ENCODE measurements at regions of chr2 and their contacts with region 1.

Region 1: DNA sequence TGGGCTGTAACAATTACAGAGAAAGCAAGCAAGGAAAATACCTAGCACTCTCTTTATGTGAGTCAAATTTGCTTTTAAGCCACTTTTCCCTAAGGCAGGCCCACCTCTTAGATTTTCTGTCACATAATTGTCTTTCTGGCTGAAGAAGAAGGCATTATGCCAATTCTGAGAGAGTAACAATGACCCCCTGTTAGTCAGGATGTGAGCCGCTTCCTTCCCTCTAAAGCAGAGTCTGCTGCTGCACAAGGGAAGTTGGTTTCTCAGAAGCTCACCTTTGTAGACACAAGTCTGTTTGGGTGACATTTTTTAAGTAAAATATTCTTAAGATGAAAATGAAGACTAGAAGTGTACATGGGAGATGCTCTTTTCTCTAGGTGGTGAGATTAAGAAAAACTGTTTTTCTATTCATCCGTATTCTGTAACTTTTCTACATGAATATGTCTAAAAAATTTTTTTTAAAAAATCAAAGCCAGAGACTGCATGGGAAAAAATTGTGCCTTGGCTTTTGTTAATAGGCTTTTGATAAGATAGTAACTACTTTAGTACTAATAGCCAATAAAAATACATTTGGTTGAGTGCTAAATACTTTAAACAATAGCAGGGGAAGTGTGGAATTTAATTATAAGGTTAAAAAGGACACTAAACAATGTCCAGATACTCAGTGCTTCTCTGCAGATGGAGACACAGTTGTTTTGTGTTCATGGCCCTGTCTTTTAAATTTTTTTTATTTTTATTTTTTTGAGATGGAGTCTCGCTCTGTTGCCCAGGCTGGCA is 33.4 kb upstream of the VPS54 start:
- DNase-seq: peak in 14 of 35 experiments; percentile 8 to 43 (median 22)
- ATAC-seq: peak; percentile 55 to 78 (median 76)
- H3K4me3 ChIP-seq: no peak overlapping the region
- H3K4me3 Mint-ChIP-seq: peak overlapping the region in 1 of 3 donors; percentile 29
- H3K27ac ChIP-seq: no peak overlapping the region
- H3K27ac Mint-ChIP-seq: peak overlapping the region; percentile 75 to 80
- H3K4me1 ChIP-seq: peaks cover 16 to 33% of the 10 kb centered on the region in 2 experiments
- H3K4me1 Mint-ChIP-seq: peaks cover 41 to 56% (median 43%) of the 10 kb centered on the region in 3 donors
- H3K27me3 ChIP-seq: no peaks in the 10 kb centered on the region
- H3K27me3 Mint-ChIP-seq: no peaks in the 10 kb centered on the region

Region 2: DNA sequence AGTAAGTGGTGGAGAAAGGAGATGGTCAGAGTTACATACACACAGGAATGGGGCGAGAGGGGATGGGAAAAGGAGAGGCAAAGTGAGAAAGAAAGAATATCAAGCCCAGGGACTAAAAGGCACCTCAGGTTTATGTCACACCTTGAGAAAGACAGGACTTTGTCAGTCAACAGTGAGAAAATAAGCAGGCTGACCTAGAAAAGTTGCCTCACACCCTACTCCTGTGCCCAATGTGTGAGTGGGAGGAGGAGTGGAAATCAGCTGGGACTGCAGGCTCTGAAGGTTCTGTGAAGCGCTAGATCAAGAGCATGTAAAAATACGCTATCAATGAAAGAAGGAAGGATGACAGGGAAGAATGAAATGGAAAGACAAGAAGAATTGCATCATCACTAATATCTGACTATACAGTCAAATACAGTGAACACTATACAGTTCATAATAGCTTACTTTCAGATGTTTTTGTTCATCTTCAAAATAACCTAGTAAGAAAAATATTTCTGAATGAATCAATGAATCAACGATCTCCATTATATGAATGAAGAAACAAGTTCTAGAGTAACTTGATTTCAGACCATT is 44.1 kb before region 1 on chr2:
- CTCF ChIA-PET with region 1: no interaction called
- POLR2A ChIA-PET with region 1: interaction called in 1 of 2 experiments, 13 read pairs
- DNase-seq: no peak
- ATAC-seq: no peak
- H3K4me3 ChIP-seq: no peak overlapping the region
- H3K4me3 Mint-ChIP-seq: no peak overlapping the region
- H3K27ac ChIP-seq: no peak overlapping the region
- H3K27ac Mint-ChIP-seq: no peak overlapping the region
- H3K4me1 ChIP-seq: no peaks in the 10 kb centered on the region
- H3K4me1 Mint-ChIP-seq: peaks cover 23 to 35% (median 33%) of the 10 kb centered on the region in 3 donors
- H3K27me3 ChIP-seq: no peaks in the 10 kb centered on the region
- H3K27me3 Mint-ChIP-seq: no peaks in the 10 kb centered on the region

Region 3: GRCh38 chr2:64018673-64018922 is 34.1 kb before region 1 on chr2:
- CTCF ChIA-PET with region 1: no interaction called
- POLR2A ChIA-PET with region 1: no interaction called
- DNase-seq: no peak
- ATAC-seq: no peak
- H3K4me3 ChIP-seq: peak overlapping the region; percentile 81 to 97
- H3K4me3 Mint-ChIP-seq: peak overlapping the region; percentile 97 to 100 (median 99)
- H3K27ac ChIP-seq: peak overlapping the region; percentile 47
- H3K27ac Mint-ChIP-seq: peak overlapping the region; percentile 95 to 96
- H3K4me1 ChIP-seq: peaks cover 6 to 14% of the 10 kb centered on the region in 2 experiments
- H3K4me1 Mint-ChIP-seq: peaks cover 46 to 51% (median 49%) of the 10 kb centered on the region in 3 donors
- H3K27me3 ChIP-seq: no peaks in the 10 kb centered on the region
- H3K27me3 Mint-ChIP-seq: no peaks in the 10 kb centered on the region

Region 4: DNA sequence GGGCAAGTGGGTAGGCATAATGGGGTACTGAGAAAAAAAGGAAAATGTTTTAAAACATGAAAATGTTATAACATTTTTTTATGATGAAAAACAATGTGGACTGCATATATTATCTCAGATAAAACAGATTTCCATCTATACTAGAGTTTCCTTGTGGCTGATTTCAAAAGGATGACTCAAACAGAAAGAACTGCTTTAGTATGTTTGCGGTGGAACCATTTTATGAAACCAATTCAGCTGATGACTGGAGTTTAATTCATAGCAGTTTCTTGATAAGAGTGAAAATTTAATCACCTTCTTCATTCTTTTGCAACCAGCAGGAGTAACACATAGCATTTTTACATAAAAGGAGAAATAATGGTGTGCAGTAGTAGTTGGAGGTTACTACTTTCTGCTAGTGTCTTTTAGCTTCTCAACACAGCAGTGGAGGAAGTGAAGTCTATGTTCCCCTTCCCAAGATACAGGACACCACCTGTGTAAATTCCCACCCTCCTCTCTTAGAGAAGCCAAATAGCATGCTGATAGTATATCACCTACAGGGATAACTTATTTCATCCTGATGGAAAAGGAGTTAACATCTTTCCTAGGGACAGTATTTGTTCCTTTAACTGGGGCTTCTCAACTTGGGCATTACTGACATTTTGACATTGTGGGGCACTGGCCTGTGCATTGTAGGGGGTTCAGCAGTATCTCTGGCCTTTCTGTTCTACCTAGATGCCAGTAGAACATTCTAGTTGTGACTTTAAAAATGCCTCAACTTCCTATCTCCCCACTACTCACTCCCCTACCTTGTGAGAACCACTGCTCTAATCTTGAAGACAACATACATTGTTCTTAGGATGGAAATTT is 61.6 kb after region 1 on chr2:
- CTCF ChIA-PET with region 1: no interaction called
- POLR2A ChIA-PET with region 1: no interaction called
- DNase-seq: peak in 1 of 35 experiments; percentile 38
- ATAC-seq: peak; percentile 64 to 87 (median 86)
- H3K4me3 ChIP-seq: no peak overlapping the region
- H3K4me3 Mint-ChIP-seq: peak overlapping the region; percentile 1 to 49 (median 1)
- H3K27ac ChIP-seq: peak overlapping the region; percentile 28
- H3K27ac Mint-ChIP-seq: peak overlapping the region; percentile 31 to 41
- H3K4me1 ChIP-seq: peaks cover 13 to 34% of the 10 kb centered on the region in 2 experiments
- H3K4me1 Mint-ChIP-seq: peaks cover 75 to 84% (median 80%) of the 10 kb centered on the region in 3 donors
- H3K27me3 ChIP-seq: no peaks in the 10 kb centered on the region
- H3K27me3 Mint-ChIP-seq: no peaks in the 10 kb centered on the region

Region 5: DNA sequence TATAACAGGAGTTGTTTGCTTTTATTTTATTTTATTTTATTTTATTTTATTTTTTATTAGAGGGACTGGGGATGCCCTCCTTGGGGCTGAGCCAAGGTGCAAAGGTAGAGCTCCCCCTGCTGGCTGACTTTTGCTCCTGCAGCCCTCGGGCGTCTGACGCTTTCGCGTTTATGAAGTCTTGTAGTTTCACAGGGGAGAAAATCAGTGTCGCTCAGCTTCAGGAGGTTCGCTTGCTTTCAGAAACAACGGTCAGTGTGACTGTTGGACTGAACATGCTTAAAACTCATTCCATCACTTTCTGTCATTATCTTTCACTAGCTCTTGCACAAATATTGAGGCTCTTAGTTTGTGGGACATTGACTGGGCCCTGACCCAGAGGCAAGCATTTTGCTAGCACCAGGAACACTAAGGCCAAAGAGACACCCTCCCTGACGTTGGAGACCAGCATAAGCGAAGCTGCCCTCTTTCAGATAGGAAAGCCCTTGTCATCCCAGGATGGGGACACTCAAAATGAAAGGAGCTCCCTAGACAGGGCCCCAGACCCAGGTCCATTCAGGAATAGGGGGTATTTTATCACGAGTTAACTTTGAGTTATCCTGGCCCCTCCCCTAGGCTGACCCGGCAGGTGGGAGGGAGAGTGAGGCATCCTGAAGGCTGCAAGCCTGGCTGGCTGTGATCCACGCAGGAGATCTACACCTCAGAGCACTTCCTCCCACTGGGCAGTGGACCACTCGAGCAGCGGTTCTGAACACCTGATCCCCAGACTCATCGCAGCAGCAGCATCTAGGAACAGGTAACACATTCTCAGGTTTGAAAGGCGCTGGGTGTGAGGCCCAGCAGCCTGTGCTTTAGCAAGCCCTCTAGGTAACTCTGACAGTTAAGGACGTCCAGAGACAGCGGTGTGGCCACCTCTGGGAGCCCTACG is 435.7 kb after region 1 on chr2:
- CTCF ChIA-PET with region 1: interaction called, 5 to 19 read pairs
- POLR2A ChIA-PET with region 1: no interaction called
- DNase-seq: peak; percentile 36 to 86 (median 70)
- ATAC-seq: peak; percentile 76 to 87 (median 78)
- H3K4me3 ChIP-seq: no peak overlapping the region
- H3K4me3 Mint-ChIP-seq: no peak overlapping the region
- H3K27ac ChIP-seq: no peak overlapping the region
- H3K27ac Mint-ChIP-seq: no peak overlapping the region
- H3K4me1 ChIP-seq: peaks cover 4 to 15% of the 10 kb centered on the region in 2 experiments
- H3K4me1 Mint-ChIP-seq: peaks cover 9 to 15% (median 13%) of the 10 kb centered on the region in 3 donors
- H3K27me3 ChIP-seq: peaks cover 0 to 10% of the 10 kb centered on the region in 2 experiments
- H3K27me3 Mint-ChIP-seq: peaks cover 1 to 5% of the 10 kb centered on the region in 2 donors